ENCODE measurements at regions of chr5 and their contacts with region 1.

Region 1: GRCh38 chr5:95712347-95712958 is 18.7 kb upstream of the RHOBTB3 start:
- DNase-seq: no peak
- ATAC-seq: peak in 2 of 4 donors; percentile 63 to 66
- H3K4me3 ChIP-seq: no peak overlapping the region
- H3K27ac ChIP-seq: no peak overlapping the region
- H3K4me1 ChIP-seq: peaks cover 0 to 18% (median 4%) of the 10 kb centered on the region in 12 donors
- H3K27me3 ChIP-seq: no peaks in the 10 kb centered on the region
- CTCF ChIP-seq: no peak
- POLR2A ChIP-seq: no peak

Region 2: GRCh38 chr5:95261437-95262175 is 450.8 kb before region 1 on chr5:
- intact Hi-C with region 1: no loop called
- DNase-seq: no peak
- ATAC-seq: peak in 3 of 4 donors; percentile 20 to 69 (median 47)
- H3K4me3 ChIP-seq: no peak overlapping the region
- H3K27ac ChIP-seq: no peak overlapping the region
- H3K4me1 ChIP-seq: peaks cover 0 to 10% (median 0%) of the 10 kb centered on the region in 12 donors
- H3K27me3 ChIP-seq: no peaks in the 10 kb centered on the region
- CTCF ChIP-seq: peak in 9 of 12 donors; percentile 17 to 53 (median 40)
- POLR2A ChIP-seq: no peak

Region 3: DNA sequence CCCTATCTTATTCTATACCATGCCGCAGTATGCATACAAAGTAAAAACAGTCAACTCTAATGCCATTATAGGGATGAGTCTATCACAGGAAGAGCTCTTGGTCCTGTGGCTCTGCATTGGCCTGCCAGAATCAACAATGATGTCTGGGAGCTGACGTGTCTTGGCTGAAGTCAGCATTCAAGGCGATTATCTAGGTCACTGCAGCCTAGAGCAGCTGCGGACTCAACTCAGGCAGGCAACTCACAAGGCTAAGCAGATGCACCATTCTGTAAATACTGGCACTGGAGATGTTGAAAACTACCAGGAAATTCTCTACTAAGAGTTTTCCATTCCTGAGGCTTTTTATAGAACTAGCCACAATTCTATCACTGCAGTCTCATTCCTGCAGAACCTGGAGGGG is 42.9 kb before region 1 on chr5:
- intact Hi-C with region 1: loop called in 1 of 10 experiments (anchors 5 kb)
- DNase-seq: peak; percentile 63 to 84 (median 78)
- ATAC-seq: peak; percentile 92 to 98 (median 98)
- H3K4me3 ChIP-seq: no peak overlapping the region
- H3K27ac ChIP-seq: peak overlapping the region in 11 of 12 donors; percentile 29 to 81 (median 53)
- H3K4me1 ChIP-seq: peaks cover 0 to 38% (median 18%) of the 10 kb centered on the region in 12 donors
- H3K27me3 ChIP-seq: no peaks in the 10 kb centered on the region
- CTCF ChIP-seq: no peak
- POLR2A ChIP-seq: no peak

Region 4: DNA sequence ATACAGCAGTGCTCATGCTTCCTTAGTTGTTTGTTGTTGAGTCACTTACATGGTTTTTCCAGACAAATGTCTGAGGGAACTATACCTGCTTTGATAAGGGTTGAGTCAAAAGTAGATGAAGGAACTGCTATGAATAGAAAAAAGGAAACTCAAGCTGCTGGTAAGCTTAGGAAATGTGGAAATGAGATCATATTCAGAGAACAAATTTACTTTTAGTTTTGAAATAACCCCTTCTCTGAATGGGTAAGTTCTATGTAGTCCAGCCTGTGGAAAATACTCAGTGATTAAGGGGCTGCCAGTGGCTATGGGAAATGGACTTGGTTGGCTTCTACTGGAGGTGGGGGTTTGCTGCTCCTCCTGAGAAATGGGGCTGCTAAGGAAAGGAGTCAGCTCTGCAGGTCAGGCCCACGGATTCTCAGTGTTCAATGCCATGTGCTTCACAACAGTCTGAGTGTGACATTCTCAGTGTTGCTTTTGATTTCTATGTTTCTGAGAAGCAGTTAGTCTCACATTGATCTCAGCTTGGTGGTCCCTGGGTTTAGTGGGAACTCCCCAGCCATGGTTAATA is 157.7 kb after region 1 on chr5:
- intact Hi-C with region 1: no loop called
- DNase-seq: no peak
- ATAC-seq: peak; percentile 27 to 80 (median 53)
- H3K4me3 ChIP-seq: peak overlapping the region in 1 of 12 donors; percentile 9
- H3K27ac ChIP-seq: peak overlapping the region in 6 of 12 donors; percentile 15 to 90 (median 39)
- H3K4me1 ChIP-seq: peaks cover 0 to 62% (median 4%) of the 10 kb centered on the region in 12 donors
- H3K27me3 ChIP-seq: no peaks in the 10 kb centered on the region
- CTCF ChIP-seq: no peak
- POLR2A ChIP-seq: no peak

Measured in heart left ventricle (tissue), 16 donors.